ENCODE measurements at regions of chr10 and their contacts with region 1.

Region 1: DNA sequence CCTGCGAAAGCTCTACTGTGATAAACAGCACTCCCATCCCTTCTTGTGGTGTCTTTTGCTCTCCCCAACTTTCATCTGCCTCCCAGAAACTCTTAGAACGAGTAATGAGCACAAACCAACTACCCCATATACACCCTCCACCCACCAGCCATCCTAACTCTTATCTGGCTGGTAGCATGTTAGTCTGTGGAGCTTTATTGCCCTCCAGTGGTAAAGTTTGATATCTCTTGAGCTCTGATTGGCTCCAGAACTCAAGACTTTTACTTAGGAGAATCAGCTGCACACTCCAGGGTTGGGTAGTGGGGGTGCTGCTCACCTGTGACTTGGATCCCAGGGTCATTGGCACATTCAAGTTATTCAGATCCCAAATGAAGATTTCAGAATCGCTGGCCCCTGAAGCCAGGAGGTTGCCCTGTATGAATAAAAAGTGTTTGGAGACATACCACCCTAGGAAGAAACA is 10.9 kb downstream of the SEC31B start:
- DNase-seq: no peak
- ATAC-seq: peak; percentile 93
- H3K4me3 Mint-ChIP-seq: no peak overlapping the region
- H3K27ac Mint-ChIP-seq: no peak overlapping the region
- H3K4me1 Mint-ChIP-seq: peaks cover 6% of the 10 kb centered on the region; the same call in 1 of the 2 replicates
- H3K27me3 Mint-ChIP-seq: peaks cover 60% of the 10 kb centered on the region
- CTCF ChIP-seq: peak; percentile 47; the same call in 1 of the 2 replicates

Region 2: DNA sequence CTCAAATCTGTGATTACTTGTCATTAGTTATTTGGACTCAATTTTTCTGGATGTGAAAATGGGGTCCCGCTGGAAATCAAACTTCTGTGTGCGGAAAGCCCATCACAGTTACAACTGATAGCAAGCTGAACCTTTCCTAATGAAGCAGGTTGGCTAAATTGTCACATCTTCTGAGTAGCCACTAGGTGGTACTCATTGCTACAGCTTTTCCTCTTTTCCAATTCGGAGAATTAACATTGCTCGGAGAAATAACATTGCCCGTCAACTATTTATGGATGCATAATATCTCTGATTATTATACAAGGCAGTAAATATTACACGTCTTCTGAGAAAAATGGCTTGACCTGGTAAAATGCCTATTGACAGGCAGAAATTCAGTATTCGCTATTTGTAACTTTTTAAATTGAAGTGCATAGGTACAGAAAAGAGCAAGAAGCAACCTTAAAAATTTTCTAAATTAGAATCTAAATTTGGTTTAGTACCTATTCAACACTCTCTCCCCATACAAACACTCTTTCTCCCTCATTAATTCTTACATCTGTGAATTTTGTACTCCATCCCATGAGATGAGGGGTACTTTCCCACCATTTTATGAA is 204.9 kb before region 1 on chr10:
- CTCF ChIA-PET with region 1: interaction called, 10 read pairs
- POLR2A ChIA-PET with region 1: no interaction called
- DNase-seq: no peak
- ATAC-seq: peak; percentile 67
- H3K4me3 Mint-ChIP-seq: no peak overlapping the region
- H3K27ac Mint-ChIP-seq: no peak overlapping the region
- H3K4me1 Mint-ChIP-seq: peaks cover 28% of the 10 kb centered on the region
- H3K27me3 Mint-ChIP-seq: peaks cover 7% of the 10 kb centered on the region; the same call in 1 of the 2 replicates
- CTCF ChIP-seq: no peak

Region 3: DNA sequence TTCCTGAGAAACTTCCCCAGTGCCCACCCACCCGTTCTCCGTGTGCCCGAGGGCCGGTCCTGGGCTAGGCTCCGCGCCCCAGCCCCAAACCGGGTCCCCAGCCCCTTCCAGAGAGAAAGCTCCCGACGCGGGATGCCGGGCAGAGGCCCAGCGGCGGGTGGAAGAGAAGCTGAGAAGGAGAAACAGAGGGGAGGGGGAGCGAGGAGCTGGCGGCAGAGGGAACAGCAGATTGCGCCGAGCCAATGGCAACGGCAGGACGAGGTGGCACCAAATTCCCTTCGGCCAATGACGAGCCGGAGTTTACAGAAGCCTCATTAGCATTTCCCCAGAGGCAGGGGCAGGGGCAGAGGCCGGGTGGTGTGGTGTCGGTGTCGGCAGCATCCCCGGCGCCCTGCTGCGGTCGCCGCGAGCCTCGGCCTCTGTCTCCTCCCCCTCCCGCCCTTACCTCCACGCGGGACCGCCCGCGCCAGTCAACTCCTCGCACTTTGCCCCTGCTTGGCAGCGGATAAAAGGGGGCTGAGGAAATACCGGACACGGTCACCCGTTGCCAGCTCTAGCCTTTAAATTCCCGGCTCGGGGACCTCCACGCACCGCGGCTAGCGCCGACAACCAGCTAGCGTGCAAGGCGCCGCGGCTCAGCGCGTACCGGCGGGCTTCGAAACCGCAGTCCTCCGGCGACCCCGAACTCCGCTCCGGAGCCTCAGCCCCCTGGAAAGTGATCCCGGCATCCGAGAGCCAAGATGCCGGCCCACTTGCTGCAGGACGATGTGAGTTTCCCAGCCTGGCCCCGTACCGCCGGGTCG is 161.8 kb before region 1 on chr10 and contains the start of gene SCD:
- CTCF ChIA-PET with region 1: interaction called, 10 read pairs
- POLR2A ChIA-PET with region 1: no interaction called
- DNase-seq: peak; percentile 89
- ATAC-seq: peak; percentile 84
- H3K4me3 Mint-ChIP-seq: peak within 1 kb of the TSS; percentile 96
- H3K27ac Mint-ChIP-seq: peak within 1 kb of the TSS; percentile 98
- H3K4me1 Mint-ChIP-seq: peaks cover 62% of the 10 kb centered on the region
- H3K27me3 Mint-ChIP-seq: no peaks in the 10 kb centered on the region
- CTCF ChIP-seq: no peak
- total RNA-seq, gene SCD: 490 to 556 TPM (median 501 TPM) in 3 replicates

Region 4: DNA sequence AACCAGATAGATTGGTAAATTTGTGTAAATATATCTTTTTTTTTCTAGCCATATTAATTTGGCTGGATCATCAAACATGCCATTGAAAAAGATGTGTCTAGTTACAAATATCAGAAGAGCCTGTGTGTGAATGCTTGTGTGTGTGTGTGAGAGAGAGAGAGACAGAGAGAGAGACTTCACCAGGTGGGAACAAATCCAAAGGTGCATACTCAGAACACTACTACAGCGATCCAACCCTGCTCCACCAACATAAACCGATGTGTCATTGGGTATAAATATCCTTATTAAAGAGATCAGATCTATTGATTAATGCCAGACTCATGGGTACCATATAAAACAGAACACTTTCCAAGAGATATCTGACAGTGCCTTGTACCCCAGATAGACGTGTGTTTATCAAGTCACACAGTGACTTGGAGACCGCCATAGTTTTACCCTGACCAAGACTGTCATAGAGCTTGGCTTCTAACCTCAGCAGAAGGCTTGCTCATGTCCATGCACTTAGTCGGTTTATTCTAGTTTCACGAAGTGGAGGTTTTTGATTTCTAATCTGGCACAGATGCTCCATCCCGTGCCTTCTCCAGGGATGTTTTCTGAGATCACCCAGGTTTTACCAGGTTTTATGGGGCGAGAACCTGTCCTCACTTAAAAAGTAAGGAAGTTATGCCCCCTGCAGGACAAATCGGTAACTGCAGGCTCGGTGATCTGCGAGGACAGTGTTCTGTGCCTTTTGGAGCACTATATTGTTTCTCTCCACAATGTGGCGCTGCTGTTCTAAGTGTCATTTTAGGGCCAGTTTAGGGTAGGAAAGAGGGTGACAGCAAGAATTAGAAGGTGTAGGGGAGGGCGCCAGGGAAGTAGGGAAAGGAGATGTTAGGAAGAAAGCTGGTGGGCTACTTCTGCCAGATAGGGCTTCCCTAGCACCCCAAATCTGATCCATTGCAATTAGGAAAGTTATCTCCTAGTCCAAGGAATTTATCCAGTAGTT is 75.2 kb before region 1 on chr10:
- CTCF ChIA-PET with region 1: interaction called, 38 read pairs
- POLR2A ChIA-PET with region 1: no interaction called
- DNase-seq: peak; percentile 98
- ATAC-seq: peak; percentile 99
- H3K4me3 Mint-ChIP-seq: no peak overlapping the region
- H3K27ac Mint-ChIP-seq: no peak overlapping the region; the same call in 1 of the 2 replicates
- H3K4me1 Mint-ChIP-seq: peaks cover 6% of the 10 kb centered on the region
- H3K27me3 Mint-ChIP-seq: no peaks in the 10 kb centered on the region; the same call in 1 of the 2 replicates
- CTCF ChIP-seq: peak; percentile 99

Region 5: GRCh38 chr10:100448951-100449350 is 59.8 kb before region 1 on chr10:
- CTCF ChIA-PET with region 1: interaction called, 10 read pairs
- POLR2A ChIA-PET with region 1: no interaction called
- DNase-seq: no peak
- ATAC-seq: no peak
- H3K4me3 Mint-ChIP-seq: no peak overlapping the region
- H3K27ac Mint-ChIP-seq: no peak overlapping the region
- H3K4me1 Mint-ChIP-seq: no peaks in the 10 kb centered on the region
- H3K27me3 Mint-ChIP-seq: peaks cover 40% of the 10 kb centered on the region
- CTCF ChIP-seq: no peak

Region 6: GRCh38 chr10:100481462-100482081 is 27.1 kb before region 1 on chr10:
- CTCF ChIA-PET with region 1: interaction called, 120 read pairs
- POLR2A ChIA-PET with region 1: interaction called, 3 read pairs
- DNase-seq: peak; percentile 89
- ATAC-seq: peak; percentile 76
- H3K4me3 Mint-ChIP-seq: peak overlapping the region; percentile 75
- H3K27ac Mint-ChIP-seq: no peak overlapping the region
- H3K4me1 Mint-ChIP-seq: peaks cover 40% of the 10 kb centered on the region
- H3K27me3 Mint-ChIP-seq: peaks cover 94% of the 10 kb centered on the region
- CTCF ChIP-seq: no peak

Region 7: GRCh38 chr10:100535715-100536353 is 27.1 kb after region 1 on chr10 and contains the start of gene HIF1AN:
- CTCF ChIA-PET with region 1: interaction called, 10 read pairs
- POLR2A ChIA-PET with region 1: no interaction called
- DNase-seq: peak; percentile 86
- ATAC-seq: peak; percentile 98
- H3K4me3 Mint-ChIP-seq: no peak within 1 kb of the TSS
- H3K27ac Mint-ChIP-seq: peak within 1 kb of the TSS; percentile 73
- H3K4me1 Mint-ChIP-seq: peaks cover 7% of the 10 kb centered on the region; the same call in 1 of the 2 replicates
- H3K27me3 Mint-ChIP-seq: no peaks in the 10 kb centered on the region
- CTCF ChIP-seq: peak; percentile 69
- total RNA-seq, gene HIF1AN: 49.9 to 58.3 TPM (median 53.9 TPM) in 3 replicates

Region 8: GRCh38 chr10:100614429-100615095 is 105.8 kb after region 1 on chr10:
- CTCF ChIA-PET with region 1: no interaction called
- POLR2A ChIA-PET with region 1: no interaction called
- DNase-seq: no peak
- ATAC-seq: peak; percentile 73
- H3K4me3 Mint-ChIP-seq: no peak overlapping the region
- H3K27ac Mint-ChIP-seq: no peak overlapping the region
- H3K4me1 Mint-ChIP-seq: peaks cover 5% of the 10 kb centered on the region; the same call in 1 of the 2 replicates
- H3K27me3 Mint-ChIP-seq: peaks cover 14% of the 10 kb centered on the region
- CTCF ChIP-seq: no peak

Region 9: DNA sequence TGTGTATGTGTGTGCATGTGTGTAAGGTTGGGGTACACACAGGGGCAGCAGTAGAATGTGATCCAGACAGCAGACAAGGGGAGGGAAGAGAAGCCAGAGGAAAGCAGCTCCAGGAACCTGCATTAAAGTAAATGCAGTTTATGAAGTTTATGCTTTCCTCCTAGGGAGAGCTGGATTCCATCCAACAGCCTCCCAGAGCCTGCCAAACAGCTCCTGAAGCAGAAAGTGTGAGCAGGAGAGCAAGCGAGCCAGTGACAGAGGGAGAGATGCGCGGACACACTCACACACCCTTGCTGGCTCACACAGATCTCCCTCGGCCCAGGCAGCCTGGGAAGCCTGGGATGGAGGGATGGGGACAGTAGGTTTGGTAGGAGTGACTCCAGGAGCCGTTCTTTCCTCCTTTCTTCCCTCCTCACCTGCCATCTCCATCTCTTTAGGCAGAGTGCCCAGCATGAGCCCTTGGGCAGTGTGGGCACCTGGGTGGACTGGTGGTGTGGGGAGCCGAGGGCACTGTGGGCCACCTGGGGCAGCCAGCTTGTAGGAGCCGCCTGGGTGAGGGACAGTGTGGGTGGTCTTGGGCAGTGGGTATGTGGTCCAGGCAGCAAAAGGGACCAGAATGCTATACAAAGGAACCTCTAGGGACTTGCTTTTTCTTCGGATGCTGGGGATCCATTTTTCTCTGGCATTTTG is 282.8 kb after region 1 on chr10:
- CTCF ChIA-PET with region 1: no interaction called
- POLR2A ChIA-PET with region 1: no interaction called
- DNase-seq: no peak
- ATAC-seq: no peak
- H3K4me3 Mint-ChIP-seq: no peak overlapping the region
- H3K27ac Mint-ChIP-seq: no peak overlapping the region
- H3K4me1 Mint-ChIP-seq: peaks cover 46% of the 10 kb centered on the region
- H3K27me3 Mint-ChIP-seq: no peaks in the 10 kb centered on the region; the same call in 1 of the 2 replicates
- CTCF ChIP-seq: no peak